Endothelial cell of umbilical vein (primary cell): ENCODE measurements at regions of chr11 and their contacts with region 1.

Region 1: DNA sequence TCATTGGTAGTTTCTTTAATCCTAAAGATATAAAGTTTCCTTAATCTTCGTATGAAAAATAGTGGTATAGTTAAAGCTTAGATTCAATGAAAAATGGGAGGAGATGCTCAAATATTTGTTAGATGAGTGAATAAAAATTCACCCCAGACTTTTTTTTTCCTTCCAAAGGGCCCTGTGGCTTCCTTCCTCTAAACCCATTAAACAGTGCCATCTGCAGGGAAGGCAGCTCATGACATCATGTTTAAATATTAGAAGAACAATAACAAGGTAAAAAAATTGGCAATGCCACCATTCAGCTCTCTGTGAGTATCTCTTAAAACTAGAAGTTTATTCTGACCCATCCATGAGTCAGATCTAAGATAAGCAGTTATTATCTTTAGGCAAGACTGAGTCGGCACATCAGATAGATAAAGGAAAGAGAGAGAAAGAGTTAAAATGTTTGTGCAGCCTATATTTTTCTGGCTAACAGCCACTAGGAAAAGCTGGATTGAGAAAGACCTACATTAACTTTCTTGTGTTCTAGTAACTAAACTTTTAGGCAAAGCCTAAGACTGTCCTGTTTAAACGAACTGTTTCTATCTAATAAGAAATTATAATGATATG is 19.1 kb upstream of the OOSP1 start:
- DNase-seq: peak; percentile 72
- H3K4me3 ChIP-seq: no peak overlapping the region
- H3K27ac ChIP-seq: no peak overlapping the region
- H3K4me1 ChIP-seq: no peaks in the 10 kb centered on the region
- H3K27me3 ChIP-seq: no peaks in the 10 kb centered on the region
- CTCF ChIP-seq: peak; percentile 38 to 39
- POLR2A ChIP-seq: no peak

Region 2: GRCh38 chr11:59810189-59810910 is 108.7 kb before region 1 on chr11 and contains the start of gene MRPL16:
- CTCF ChIA-PET with region 1: interaction called, 32 read pairs
- POLR2A ChIA-PET with region 1: no interaction called
- dilution Hi-C with region 1: no loop called
- intact Hi-C with region 1: no loop called
- DNase-seq: peak; percentile 76
- H3K4me3 ChIP-seq: peak within 1 kb of the TSS; percentile 69 to 79 (median 74)
- H3K27ac ChIP-seq: peak within 1 kb of the TSS; percentile 59
- H3K4me1 ChIP-seq: peaks cover 6% of the 10 kb centered on the region
- H3K27me3 ChIP-seq: no peaks in the 10 kb centered on the region
- CTCF ChIP-seq: no peak
- POLR2A ChIP-seq: peak; percentile 76
- total RNA-seq, gene MRPL16: 60.3 and 63.9 TPM in 2 replicates

Region 3: GRCh38 chr11:59849129-59849528 is 70.0 kb before region 1 on chr11:
- CTCF ChIA-PET with region 1: interaction called, 11 read pairs
- POLR2A ChIA-PET with region 1: no interaction called
- dilution Hi-C with region 1: no loop called
- intact Hi-C with region 1: no loop called
- DNase-seq: peak; percentile 31
- H3K4me3 ChIP-seq: no peak overlapping the region
- H3K27ac ChIP-seq: no peak overlapping the region
- H3K4me1 ChIP-seq: no peaks in the 10 kb centered on the region
- H3K27me3 ChIP-seq: no peaks in the 10 kb centered on the region
- CTCF ChIP-seq: no peak
- POLR2A ChIP-seq: no peak

Region 4: GRCh38 chr11:59894616-59895015 is 24.5 kb before region 1 on chr11:
- CTCF ChIA-PET with region 1: interaction called, 14 read pairs
- POLR2A ChIA-PET with region 1: no interaction called
- dilution Hi-C with region 1: no loop called
- intact Hi-C with region 1: no loop called
- DNase-seq: no peak
- H3K4me3 ChIP-seq: no peak overlapping the region
- H3K27ac ChIP-seq: no peak overlapping the region
- H3K4me1 ChIP-seq: no peaks in the 10 kb centered on the region
- H3K27me3 ChIP-seq: peaks cover 0 to 3% of the 10 kb centered on the region in 2 experiments
- CTCF ChIP-seq: no peak
- POLR2A ChIP-seq: no peak

Region 5: DNA sequence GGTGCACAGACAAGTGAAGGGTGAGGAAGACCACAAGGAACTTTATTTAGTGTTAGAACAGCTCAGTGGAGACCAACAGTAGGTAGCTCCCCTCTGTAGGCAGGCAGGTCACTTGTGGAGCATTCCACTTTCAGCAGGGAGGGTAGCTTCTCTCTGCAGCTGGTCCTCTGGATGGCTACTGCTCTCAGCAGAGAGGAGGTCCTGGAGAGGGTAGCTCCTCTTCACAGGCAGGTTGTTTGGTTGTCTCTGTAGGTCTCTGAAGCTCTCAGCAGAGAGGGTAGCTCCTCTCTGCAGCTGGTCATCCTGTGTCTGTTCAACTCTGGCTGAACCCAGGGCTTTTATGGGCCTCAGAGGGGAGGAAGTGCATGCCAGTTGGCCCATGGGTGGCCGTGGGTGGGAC is 12.6 kb after region 1 on chr11:
- CTCF ChIA-PET with region 1: interaction called, 12 read pairs
- POLR2A ChIA-PET with region 1: no interaction called
- dilution Hi-C with region 1: no loop called
- intact Hi-C with region 1: no loop called
- DNase-seq: no peak
- H3K4me3 ChIP-seq: no peak overlapping the region
- H3K27ac ChIP-seq: no peak overlapping the region
- H3K4me1 ChIP-seq: no peaks in the 10 kb centered on the region
- H3K27me3 ChIP-seq: peaks cover 0 to 4% of the 10 kb centered on the region in 2 experiments
- CTCF ChIP-seq: no peak
- POLR2A ChIP-seq: no peak

Region 6: GRCh38 chr11:60130496-60130895 is 211.4 kb after region 1 on chr11:
- CTCF ChIA-PET with region 1: interaction called, 3 read pairs
- POLR2A ChIA-PET with region 1: no interaction called
- dilution Hi-C with region 1: no loop called
- intact Hi-C with region 1: loop called (anchors 1 kb)
- DNase-seq: peak; percentile 86
- H3K4me3 ChIP-seq: no peak overlapping the region
- H3K27ac ChIP-seq: no peak overlapping the region
- H3K4me1 ChIP-seq: peaks cover 12% of the 10 kb centered on the region
- H3K27me3 ChIP-seq: no peaks in the 10 kb centered on the region
- CTCF ChIP-seq: peak; percentile 24 to 44
- POLR2A ChIP-seq: no peak

Region 7: GRCh38 chr11:60345489-60345888 is 426.4 kb after region 1 on chr11:
- CTCF ChIA-PET with region 1: no interaction called
- POLR2A ChIA-PET with region 1: no interaction called
- dilution Hi-C with region 1: no loop called
- intact Hi-C with region 1: no loop called
- DNase-seq: peak; percentile 54
- H3K4me3 ChIP-seq: no peak overlapping the region
- H3K27ac ChIP-seq: no peak overlapping the region
- H3K4me1 ChIP-seq: no peaks in the 10 kb centered on the region
- H3K27me3 ChIP-seq: peaks cover 25 to 26% of the 10 kb centered on the region in 2 experiments
- CTCF ChIP-seq: peak; percentile 46 to 50
- POLR2A ChIP-seq: no peak